IMR-90 (cell line): ENCODE measurements at regions of chr11 and their contacts with region 1.

Region 1: GRCh38 chr11:12693479-12694181 is 19.4 kb downstream of the TEAD1 start:
- DNase-seq: peak; percentile 99
- ATAC-seq: peak; percentile 76
- H3K4me3 ChIP-seq: peak overlapping the region; percentile 0; the same call in 1 of the 2 replicates
- H3K27ac ChIP-seq: peak overlapping the region; percentile 76
- H3K4me1 ChIP-seq: peaks cover 45% of the 10 kb centered on the region
- H3K27me3 ChIP-seq: no peaks in the 10 kb centered on the region
- CTCF ChIP-seq: no peak
- POLR2A ChIP-seq: peak; percentile 83
- RAD21 ChIP-seq: peak; percentile 10; the same call in 1 of the 2 replicates

Region 2: DNA sequence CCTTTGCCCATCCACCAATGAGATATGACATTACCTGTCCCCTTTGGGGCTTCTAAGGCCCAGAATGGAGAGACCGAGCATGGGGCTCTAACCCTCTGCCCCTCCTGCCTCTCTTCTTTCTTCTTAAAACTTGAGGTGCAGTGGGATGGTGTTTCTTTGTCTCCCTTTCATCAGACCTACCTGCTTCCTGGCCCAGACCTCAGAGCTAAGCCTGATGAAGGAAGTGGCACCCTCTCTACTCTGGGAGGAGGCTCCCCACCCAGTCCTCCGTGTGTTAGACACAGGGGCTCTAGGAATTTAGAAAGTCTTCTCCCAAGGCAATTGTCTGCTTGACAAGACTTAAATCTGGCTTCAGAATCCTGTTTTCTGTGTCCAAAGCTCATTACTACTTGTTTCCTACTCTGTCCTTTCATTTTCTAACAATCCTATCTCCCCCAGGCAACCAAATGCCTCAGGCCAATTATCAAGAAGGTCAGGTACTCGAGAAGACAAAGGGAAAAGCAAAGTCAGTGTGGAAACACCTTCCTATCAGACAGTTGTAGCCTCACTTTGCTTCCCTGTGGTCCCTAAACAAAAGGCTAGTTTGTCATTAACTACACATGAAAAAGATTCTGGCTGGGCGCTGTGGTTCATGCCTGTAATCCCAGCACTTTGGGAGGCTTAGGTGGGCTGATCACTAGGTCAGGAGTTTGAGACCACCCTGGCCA is 336.5 kb before region 1 on chr11:
- CTCF ChIA-PET with region 1: no interaction called
- POLR2A ChIA-PET with region 1: no interaction called
- dilution Hi-C with region 1: no loop called
- in situ Hi-C with region 1: no loop called
- intact Hi-C with region 1: no loop called
- DNase-seq: no peak
- ATAC-seq: no peak
- H3K4me3 ChIP-seq: no peak overlapping the region
- H3K27ac ChIP-seq: no peak overlapping the region
- H3K4me1 ChIP-seq: peaks cover 10% of the 10 kb centered on the region
- H3K27me3 ChIP-seq: no peaks in the 10 kb centered on the region
- CTCF ChIP-seq: no peak
- POLR2A ChIP-seq: no peak
- RAD21 ChIP-seq: no peak

Region 3: GRCh38 chr11:12769834-12770345 is 76.3 kb after region 1 on chr11:
- CTCF ChIA-PET with region 1: no interaction called
- POLR2A ChIA-PET with region 1: no interaction called
- dilution Hi-C with region 1: no loop called
- in situ Hi-C with region 1: no loop called
- intact Hi-C with region 1: loop called (anchors 5 kb)
- DNase-seq: peak; percentile 75
- ATAC-seq: peak; percentile 63
- H3K4me3 ChIP-seq: no peak overlapping the region
- H3K27ac ChIP-seq: peak overlapping the region; percentile 82
- H3K4me1 ChIP-seq: peaks cover 43% of the 10 kb centered on the region
- H3K27me3 ChIP-seq: no peaks in the 10 kb centered on the region
- CTCF ChIP-seq: no peak
- POLR2A ChIP-seq: no peak
- RAD21 ChIP-seq: no peak

Region 4: DNA sequence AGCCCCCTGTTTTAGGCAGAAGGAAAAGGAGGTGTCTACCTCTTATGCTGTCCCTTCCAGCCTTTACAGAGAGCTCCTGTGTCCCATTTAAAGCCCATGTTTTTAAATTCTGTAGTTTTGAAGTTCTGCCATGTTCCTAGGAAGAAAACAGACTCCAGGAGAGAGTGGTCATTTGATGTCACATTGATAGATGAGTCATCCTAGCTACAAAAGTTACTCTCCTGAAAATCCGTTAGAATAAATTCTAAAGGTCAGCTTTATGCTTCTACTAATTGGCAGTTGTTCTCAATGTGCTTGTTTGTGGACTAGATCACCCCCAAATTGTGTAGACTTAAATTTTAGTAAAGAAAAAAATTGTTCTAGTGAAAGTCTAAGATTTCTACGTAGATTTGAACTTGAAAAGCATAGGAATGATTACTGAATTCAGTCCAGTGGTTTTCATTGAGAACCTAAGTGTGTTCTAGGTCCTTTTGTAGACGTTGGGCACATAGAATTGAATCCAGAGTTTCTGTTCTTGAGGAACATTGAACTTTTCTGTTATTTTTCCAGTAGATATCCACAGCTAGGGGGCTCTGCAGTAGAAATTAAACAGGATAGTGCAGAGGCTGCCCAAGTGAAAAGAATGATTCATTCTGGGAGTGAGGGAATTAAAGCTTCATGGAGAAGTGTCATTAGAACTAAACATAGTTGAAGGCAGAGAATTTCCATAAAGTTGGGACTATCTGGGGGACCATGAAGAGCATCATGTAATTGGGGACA is 174.9 kb after region 1 on chr11:
- CTCF ChIA-PET with region 1: no interaction called
- POLR2A ChIA-PET with region 1: interaction called, 3 read pairs
- dilution Hi-C with region 1: no loop called
- in situ Hi-C with region 1: no loop called
- intact Hi-C with region 1: loop called (anchors 1 kb)
- DNase-seq: peak; percentile 27
- ATAC-seq: peak; percentile 25; the same call in 1 of the 2 replicates
- H3K4me3 ChIP-seq: no peak overlapping the region
- H3K27ac ChIP-seq: no peak overlapping the region
- H3K4me1 ChIP-seq: peaks cover 22% of the 10 kb centered on the region
- H3K27me3 ChIP-seq: no peaks in the 10 kb centered on the region
- CTCF ChIP-seq: peak; percentile 37
- POLR2A ChIP-seq: no peak
- RAD21 ChIP-seq: 0 out of 2 replicates have a peak, but pooled peaks have one; percentile 10

Region 5: DNA sequence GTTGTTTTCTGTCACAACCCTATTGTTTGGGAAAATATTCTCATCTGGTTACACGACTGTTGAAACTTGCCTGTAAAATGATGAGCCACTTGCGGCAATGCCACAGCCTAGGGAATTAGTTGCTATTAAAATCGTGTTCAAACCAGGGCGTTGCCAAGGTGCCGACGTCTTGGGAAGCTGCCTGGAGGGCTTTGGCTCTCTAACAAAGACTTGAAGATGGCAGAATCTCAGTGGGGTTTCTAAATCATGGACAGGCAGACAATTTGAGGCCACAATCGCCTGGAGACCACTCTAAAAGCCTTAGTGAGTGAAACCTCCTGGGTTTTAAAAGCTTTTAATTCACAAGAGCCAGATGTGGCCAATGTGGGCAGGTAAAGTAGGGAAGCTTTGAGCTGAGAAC is 466.7 kb after region 1 on chr11:
- CTCF ChIA-PET with region 1: no interaction called
- POLR2A ChIA-PET with region 1: no interaction called
- dilution Hi-C with region 1: no loop called
- in situ Hi-C with region 1: no loop called
- intact Hi-C with region 1: no loop called
- DNase-seq: no peak
- ATAC-seq: no peak
- H3K4me3 ChIP-seq: no peak overlapping the region
- H3K27ac ChIP-seq: no peak overlapping the region
- H3K4me1 ChIP-seq: no peaks in the 10 kb centered on the region
- H3K27me3 ChIP-seq: peaks cover 27% of the 10 kb centered on the region
- CTCF ChIP-seq: no peak
- POLR2A ChIP-seq: no peak
- RAD21 ChIP-seq: no peak